Endothelial cell of umbilical vein (primary cell): ENCODE measurements at regions of chr17 and their contacts with region 1.

Region 1: DNA sequence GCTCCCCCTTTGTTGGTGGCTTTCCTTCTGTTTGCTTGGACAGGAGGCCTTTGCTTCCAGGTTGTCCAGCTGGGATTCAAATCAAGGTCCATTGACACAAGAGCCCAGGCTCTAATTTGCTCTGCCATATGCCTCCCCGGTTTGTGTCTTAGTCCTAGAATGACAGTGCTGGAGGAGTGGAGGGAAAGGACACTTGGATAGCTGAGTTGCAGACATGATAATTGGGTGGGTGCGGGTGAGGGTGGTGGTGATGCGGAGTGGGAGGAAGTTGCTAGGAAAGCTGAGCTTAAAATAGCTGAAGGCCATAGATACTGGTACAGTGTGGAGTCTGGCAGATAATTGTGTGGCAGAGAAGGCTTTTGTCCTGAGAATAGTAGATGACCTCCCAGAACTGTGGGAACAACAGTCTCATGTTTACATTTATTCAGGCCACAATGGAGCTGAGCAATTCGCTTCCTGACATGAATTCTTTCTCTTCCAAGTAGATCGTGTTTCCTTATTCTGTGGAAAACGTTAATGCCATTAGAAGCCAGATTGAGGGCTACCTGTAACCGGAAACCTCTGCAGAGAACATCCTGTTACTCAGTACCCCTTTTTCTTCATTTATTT is 23.8 kb downstream of the SEC14L1 start:
- DNase-seq: peak; percentile 93
- H3K4me3 ChIP-seq: peak overlapping the region in 1 of 3 experiments; percentile 25
- H3K27ac ChIP-seq: peak overlapping the region; percentile 88
- H3K4me1 ChIP-seq: peaks cover 71% of the 10 kb centered on the region
- H3K27me3 ChIP-seq: no peaks in the 10 kb centered on the region
- CTCF ChIP-seq: no peak
- POLR2A ChIP-seq: no peak

Region 2: DNA sequence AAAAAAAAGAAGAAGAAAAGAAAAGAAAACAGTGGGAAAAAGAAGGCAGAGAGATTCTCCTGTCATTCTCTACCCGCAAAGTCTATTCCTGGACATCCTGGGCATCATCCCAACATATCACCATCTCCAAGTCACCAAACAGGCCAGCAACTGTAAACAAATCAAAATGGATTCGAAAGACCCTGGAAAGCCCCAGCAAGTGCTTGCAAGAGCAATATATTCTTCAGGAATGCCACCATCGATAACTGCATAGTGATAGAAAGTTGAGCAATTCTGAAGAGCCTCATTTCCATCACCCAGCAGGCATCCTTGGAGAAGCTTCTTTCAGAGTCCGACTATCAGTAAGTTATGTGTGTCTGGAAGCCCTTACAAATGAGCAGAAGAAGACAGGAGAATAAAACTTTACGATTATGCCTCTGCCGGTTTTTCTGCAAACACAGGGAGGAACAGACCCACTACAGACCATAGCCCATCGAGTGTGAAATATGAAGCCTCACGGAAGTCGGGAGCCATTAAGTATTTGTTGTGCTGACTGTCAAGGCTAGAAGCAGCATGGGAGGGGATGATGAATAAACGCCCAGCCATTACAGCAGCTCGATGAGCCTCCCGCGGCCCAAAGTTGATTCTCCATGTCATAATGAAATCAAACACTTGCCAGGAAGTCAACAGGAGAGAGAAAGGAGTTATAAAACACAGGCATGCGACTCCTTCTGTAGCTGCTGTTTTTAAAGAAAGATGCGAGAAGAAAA is 88.3 kb before region 1 on chr17:
- CTCF ChIA-PET with region 1: no interaction called
- POLR2A ChIA-PET with region 1: no interaction called
- dilution Hi-C with region 1: no loop called
- intact Hi-C with region 1: no loop called
- DNase-seq: no peak
- H3K4me3 ChIP-seq: no peak overlapping the region
- H3K27ac ChIP-seq: no peak overlapping the region
- H3K4me1 ChIP-seq: no peaks in the 10 kb centered on the region
- H3K27me3 ChIP-seq: peaks cover 11 to 14% of the 10 kb centered on the region in 2 experiments
- CTCF ChIP-seq: no peak
- POLR2A ChIP-seq: no peak

Region 3: GRCh38 chr17:77174928-77175661 is 10.5 kb after region 1 on chr17:
- CTCF ChIA-PET with region 1: interaction called, 7 read pairs
- POLR2A ChIA-PET with region 1: interaction called, 6 read pairs
- dilution Hi-C with region 1: no loop called
- intact Hi-C with region 1: loop called (anchors 1 kb)
- DNase-seq: peak; percentile 91
- H3K4me3 ChIP-seq: no peak overlapping the region
- H3K27ac ChIP-seq: peak overlapping the region; percentile 88
- H3K4me1 ChIP-seq: peaks cover 67% of the 10 kb centered on the region
- H3K27me3 ChIP-seq: no peaks in the 10 kb centered on the region
- CTCF ChIP-seq: no peak
- POLR2A ChIP-seq: peak; percentile 74

Region 4: GRCh38 chr17:77182205-77183172 is 17.9 kb after region 1 on chr17:
- CTCF ChIA-PET with region 1: interaction called, 11 read pairs
- POLR2A ChIA-PET with region 1: interaction called, 3 read pairs
- dilution Hi-C with region 1: no loop called
- intact Hi-C with region 1: no loop called
- DNase-seq: peak; percentile 56
- H3K4me3 ChIP-seq: peak overlapping the region in 1 of 3 experiments; percentile 25
- H3K27ac ChIP-seq: peak overlapping the region; percentile 47
- H3K4me1 ChIP-seq: peaks cover 51% of the 10 kb centered on the region
- H3K27me3 ChIP-seq: no peaks in the 10 kb centered on the region
- CTCF ChIP-seq: no peak
- POLR2A ChIP-seq: peak; percentile 51